ENCODE measurements at regions of chr10 and their contacts with region 1.

Region 1: DNA sequence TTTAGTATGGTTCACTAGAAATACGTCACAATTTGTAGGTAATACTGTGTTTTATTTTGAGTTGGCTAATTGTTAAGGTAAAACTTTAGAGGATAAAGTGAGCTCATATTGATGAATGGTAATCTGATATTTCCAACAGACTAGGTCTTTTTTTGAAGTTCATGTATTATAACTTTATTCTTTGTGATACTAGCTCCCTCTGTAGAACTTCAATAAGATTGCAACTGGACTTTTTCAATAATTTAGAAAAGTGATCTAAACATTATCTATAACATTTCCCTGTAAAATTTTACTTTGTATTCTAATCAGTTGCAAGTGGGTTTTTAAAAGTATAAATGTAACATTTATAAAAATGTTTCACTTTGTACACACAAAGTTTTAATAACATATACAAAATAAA is 83.5 kb downstream of the ADK start:
- DNase-seq: peak; percentile 36
- H3K4me3 ChIP-seq: no peak overlapping the region
- H3K27ac ChIP-seq: no peak overlapping the region
- H3K4me1 ChIP-seq: peaks cover 41% of the 10 kb centered on the region
- H3K27me3 ChIP-seq: no peaks in the 10 kb centered on the region
- CTCF ChIP-seq: no peak
- POLR2A ChIP-seq: no peak

Region 2: DNA sequence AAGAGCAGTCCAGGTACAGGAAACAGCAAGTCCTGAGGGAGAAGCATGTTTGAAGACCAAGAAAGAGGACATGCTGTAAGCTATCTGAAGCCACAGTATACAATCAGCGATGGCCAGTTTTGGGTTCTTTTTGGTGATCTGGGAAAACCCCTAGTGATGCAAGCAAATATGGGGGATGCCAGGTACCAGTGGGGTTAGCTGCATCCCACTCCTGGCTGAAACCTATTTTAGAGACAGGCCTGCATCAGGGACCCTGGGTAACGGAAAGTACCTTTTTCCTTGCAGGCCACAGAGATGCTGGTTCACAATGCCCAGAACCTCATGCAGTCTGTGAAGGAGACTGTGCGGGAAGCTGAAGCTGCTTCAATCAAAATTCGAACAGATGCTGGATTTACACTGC is 116.8 kb before region 1 on chr10:
- CTCF ChIA-PET with region 1: interaction called, 97 read pairs
- POLR2A ChIA-PET with region 1: no interaction called
- dilution Hi-C with region 1: no loop called
- intact Hi-C with region 1: no loop called
- DNase-seq: no peak
- H3K4me3 ChIP-seq: no peak overlapping the region
- H3K27ac ChIP-seq: no peak overlapping the region
- H3K4me1 ChIP-seq: peaks cover 5% of the 10 kb centered on the region
- H3K27me3 ChIP-seq: no peaks in the 10 kb centered on the region
- CTCF ChIP-seq: no peak
- POLR2A ChIP-seq: no peak

Region 3: DNA sequence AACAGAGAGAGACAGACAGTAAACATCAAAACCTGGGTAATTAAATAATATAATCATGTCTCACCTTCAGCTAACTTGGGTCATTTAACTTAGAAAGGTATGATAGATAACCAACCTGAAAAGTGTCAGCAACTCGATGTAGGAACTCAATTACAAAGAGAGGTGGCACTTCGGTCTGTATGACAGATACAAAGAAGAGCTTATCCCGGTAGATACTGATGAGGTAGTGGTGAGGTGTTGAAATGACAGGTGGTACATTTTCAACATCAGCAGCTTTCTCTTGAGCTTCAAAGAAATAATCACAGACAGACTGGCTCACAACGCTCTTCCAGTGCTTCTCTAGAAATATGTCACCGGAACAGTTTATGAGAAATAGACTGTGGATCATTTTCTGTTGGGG is 96.6 kb before region 1 on chr10:
- CTCF ChIA-PET with region 1: interaction called, 39 read pairs
- POLR2A ChIA-PET with region 1: no interaction called
- dilution Hi-C with region 1: no loop called
- intact Hi-C with region 1: no loop called
- DNase-seq: no peak
- H3K4me3 ChIP-seq: no peak overlapping the region
- H3K27ac ChIP-seq: no peak overlapping the region
- H3K4me1 ChIP-seq: peaks cover 8% of the 10 kb centered on the region
- H3K27me3 ChIP-seq: no peaks in the 10 kb centered on the region
- CTCF ChIP-seq: no peak
- POLR2A ChIP-seq: no peak

Region 4: GRCh38 chr10:74151056-74151878 is 83.3 kb before region 1 on chr10 and contains the start of gene ADK:
- CTCF ChIA-PET with region 1: interaction called, 31 read pairs
- POLR2A ChIA-PET with region 1: interaction called, 3 read pairs
- dilution Hi-C with region 1: no loop called
- intact Hi-C with region 1: loop called (anchors 2 kb)
- DNase-seq: peak; percentile 99
- H3K4me3 ChIP-seq: peak within 1 kb of the TSS; percentile 82 to 96 (median 87)
- H3K27ac ChIP-seq: peak within 1 kb of the TSS; percentile 93
- H3K4me1 ChIP-seq: peaks cover 13% of the 10 kb centered on the region
- H3K27me3 ChIP-seq: no peaks in the 10 kb centered on the region
- CTCF ChIP-seq: peak in 1 of 2 donors; percentile 18
- POLR2A ChIP-seq: peak; percentile 82
- total RNA-seq, gene ADK: 38.1 and 46.5 TPM in 2 replicates

Region 5: DNA sequence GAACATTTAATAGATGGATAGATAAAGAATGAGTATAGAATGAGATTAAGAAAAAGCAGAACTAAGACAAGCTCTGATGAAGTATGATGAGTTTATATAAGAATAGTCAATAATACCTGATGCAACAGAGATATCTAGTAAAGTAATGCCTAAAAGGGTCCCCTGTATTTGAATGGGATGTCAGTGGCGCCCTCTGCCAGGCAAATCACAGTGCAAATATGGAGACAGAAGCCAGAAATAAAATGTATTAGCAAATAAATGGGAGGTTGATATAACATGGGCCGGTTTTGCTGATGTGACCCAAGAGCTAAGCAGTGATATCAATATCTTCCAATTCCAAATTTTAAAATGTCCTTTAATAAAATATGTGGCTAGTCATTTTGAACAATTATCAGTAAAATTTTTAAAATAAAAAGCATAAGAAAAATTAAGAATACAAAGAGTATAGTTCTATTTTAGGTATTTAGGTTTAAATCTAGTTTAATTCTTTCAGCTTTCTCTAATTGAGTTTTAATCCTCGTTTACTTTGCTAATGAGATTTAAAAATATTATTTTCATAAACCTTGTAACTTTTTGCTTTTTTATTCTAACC is 20.9 kb before region 1 on chr10:
- CTCF ChIA-PET with region 1: interaction called, 58 read pairs
- POLR2A ChIA-PET with region 1: no interaction called
- dilution Hi-C with region 1: no loop called
- intact Hi-C with region 1: loop called (anchors 1 kb)
- DNase-seq: peak; percentile 67
- H3K4me3 ChIP-seq: no peak overlapping the region
- H3K27ac ChIP-seq: no peak overlapping the region
- H3K4me1 ChIP-seq: no peaks in the 10 kb centered on the region
- H3K27me3 ChIP-seq: no peaks in the 10 kb centered on the region
- CTCF ChIP-seq: peak; percentile 43 to 50
- POLR2A ChIP-seq: no peak

Region 6: GRCh38 chr10:74282151-74282850 is 47.7 kb after region 1 on chr10:
- CTCF ChIA-PET with region 1: no interaction called
- POLR2A ChIA-PET with region 1: no interaction called
- dilution Hi-C with region 1: no loop called
- intact Hi-C with region 1: no loop called
- DNase-seq: no peak
- H3K4me3 ChIP-seq: no peak overlapping the region
- H3K27ac ChIP-seq: no peak overlapping the region
- H3K4me1 ChIP-seq: no peaks in the 10 kb centered on the region
- H3K27me3 ChIP-seq: no peaks in the 10 kb centered on the region
- CTCF ChIP-seq: no peak
- POLR2A ChIP-seq: no peak

Measured in endothelial cell of umbilical vein (primary cell).